ENCODE measurements at regions of chr1 and their contacts with region 1.

Region 1: DNA sequence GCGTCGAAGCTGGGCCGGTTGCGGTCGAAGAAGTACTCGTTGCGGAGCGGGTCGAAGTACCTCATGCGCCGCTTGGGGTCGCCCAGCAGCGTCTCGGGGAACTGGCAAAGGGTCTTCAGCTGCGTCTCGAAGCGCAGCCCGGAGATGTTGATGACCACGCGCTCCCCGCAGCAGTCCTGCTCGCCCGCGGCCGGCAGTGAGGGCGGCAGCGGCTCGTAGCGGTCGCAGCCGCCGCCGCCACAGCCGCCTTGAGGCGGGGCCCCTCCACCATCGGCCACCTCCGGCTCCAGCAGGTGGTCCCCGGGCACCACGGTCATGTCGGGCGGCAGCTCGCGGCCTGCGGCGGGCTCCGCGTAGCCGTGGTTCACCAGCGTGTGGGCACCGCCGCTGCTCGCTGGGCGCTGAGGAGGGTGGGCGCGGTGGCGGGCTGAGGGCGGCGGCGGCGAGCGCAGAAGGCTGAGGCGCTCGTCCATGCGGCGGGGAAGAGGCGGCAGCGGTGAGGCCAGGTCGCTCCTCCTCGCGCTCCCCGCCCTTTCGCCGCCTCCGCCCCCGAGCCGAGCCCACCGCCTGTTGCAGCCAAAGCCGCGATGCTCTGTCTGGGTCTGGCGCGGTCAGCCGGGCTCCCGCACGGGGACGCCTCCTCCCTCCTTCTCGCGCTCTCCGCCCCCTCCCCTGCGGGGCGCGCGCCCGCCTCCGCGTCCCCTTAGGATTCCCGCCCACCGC is at the start of gene KCNA3:
- DNase-seq: peak; percentile 64
- H3K4me3 Mint-ChIP-seq: peak within 1 kb of the TSS; percentile 98
- H3K27ac Mint-ChIP-seq: peak within 1 kb of the TSS; percentile 90
- H3K4me1 Mint-ChIP-seq: peaks cover 43% of the 10 kb centered on the region
- H3K27me3 Mint-ChIP-seq: no peaks in the 10 kb centered on the region
- total RNA-seq, gene KCNA3: 24.0 and 24.4 TPM in 2 replicates

Region 2: DNA sequence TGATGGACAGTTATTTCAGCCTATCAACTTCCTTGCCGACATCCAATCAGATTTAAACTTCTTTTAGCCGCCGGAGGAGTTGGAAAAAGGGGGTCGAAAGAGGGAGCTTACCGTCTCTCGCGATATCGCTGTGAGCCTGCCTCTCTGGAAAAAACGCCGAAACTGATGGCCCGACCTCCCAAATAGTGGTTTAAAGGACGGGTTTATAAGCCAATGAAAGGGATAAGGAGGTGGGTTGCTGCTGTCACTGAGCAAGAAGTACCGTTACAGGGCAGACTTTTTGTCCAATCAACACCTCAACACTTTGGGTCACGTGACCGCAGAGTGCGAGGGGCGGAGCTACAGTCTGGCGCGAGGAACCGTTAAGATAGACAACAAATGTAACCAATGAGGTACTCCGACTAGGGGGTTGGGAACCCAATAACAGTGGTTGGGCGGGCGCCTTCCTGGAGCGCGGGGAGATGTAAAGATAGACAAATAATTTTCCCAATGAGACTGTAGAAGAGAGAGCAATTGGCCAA is 335.6 kb before region 1 on chr1 and contains the start of gene RBM15:
- intact Hi-C with region 1: loop called (anchors 2 kb)
- DNase-seq: peak; percentile 98
- H3K4me3 Mint-ChIP-seq: no peak within 1 kb of the TSS
- H3K27ac Mint-ChIP-seq: no peak within 1 kb of the TSS
- H3K4me1 Mint-ChIP-seq: peaks cover 52% of the 10 kb centered on the region
- H3K27me3 Mint-ChIP-seq: no peaks in the 10 kb centered on the region
- total RNA-seq, gene RBM15: 55.5 TPM in 2 replicates

Region 3: GRCh38 chr1:110645821-110646735 is 28.4 kb before region 1 on chr1:
- intact Hi-C with region 1: loop called (anchors 1 kb)
- DNase-seq: no peak
- H3K4me3 Mint-ChIP-seq: peak overlapping the region; percentile 49
- H3K27ac Mint-ChIP-seq: peak overlapping the region; percentile 77
- H3K4me1 Mint-ChIP-seq: peaks cover 53% of the 10 kb centered on the region
- H3K27me3 Mint-ChIP-seq: no peaks in the 10 kb centered on the region

Region 4: GRCh38 chr1:110657351-110657750 is 17.1 kb before region 1 on chr1:
- intact Hi-C with region 1: no loop called
- DNase-seq: no peak
- H3K4me3 Mint-ChIP-seq: no peak overlapping the region
- H3K27ac Mint-ChIP-seq: no peak overlapping the region
- H3K4me1 Mint-ChIP-seq: peaks cover 27% of the 10 kb centered on the region
- H3K27me3 Mint-ChIP-seq: no peaks in the 10 kb centered on the region

Region 5: DNA sequence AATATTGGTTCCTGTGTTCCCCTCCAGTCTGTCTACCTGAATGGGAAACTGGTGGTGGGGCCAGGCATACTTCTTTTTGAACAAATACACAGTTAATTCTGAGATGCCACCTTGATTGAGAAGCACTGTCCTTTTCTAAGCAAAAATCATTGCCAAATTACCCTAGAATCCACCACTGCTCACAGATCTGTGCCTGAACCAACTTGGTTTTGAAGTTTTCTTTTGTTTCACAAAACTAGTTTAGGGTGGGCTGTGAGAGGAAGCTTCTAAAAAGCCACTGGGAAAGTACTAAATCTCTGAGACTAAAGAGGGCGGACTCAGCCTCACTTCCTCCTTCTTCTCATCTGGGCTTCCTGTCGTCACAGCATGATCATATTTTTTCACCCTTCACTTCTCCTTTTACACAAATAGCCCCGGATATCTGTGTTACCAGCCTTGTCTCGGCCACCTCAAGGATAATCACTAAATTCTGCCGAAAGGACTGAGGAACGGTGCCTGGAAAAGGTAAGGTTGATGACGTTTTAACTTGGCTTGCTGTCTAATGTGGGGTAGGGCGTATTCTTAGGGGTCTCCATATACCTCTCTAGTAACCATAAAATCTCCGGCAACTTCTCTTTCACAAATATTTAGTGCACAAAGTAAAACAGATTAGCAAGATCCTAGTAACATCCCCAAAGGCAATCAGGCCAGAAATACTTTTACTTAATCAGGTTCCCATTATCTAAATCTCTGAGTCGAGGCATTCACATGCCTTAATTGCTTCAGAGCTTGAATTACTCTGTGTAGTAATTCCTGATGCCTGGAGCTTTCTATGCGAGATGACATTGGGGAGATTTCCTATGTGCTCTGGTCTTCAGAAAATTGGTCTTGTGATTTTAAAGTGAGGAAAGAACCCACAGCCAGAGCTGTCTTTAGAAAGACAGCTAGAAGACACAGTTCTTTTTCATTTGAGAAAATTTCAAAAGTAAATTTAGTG is 198.5 kb after region 1 on chr1 and contains the start of gene CD53:
- intact Hi-C with region 1: loop called (anchors 1 kb)
- DNase-seq: peak; percentile 39
- H3K4me3 Mint-ChIP-seq: peak within 1 kb of the TSS; percentile 98
- H3K27ac Mint-ChIP-seq: peak within 1 kb of the TSS; percentile 98
- H3K4me1 Mint-ChIP-seq: peaks cover 34% of the 10 kb centered on the region
- H3K27me3 Mint-ChIP-seq: no peaks in the 10 kb centered on the region
- total RNA-seq, gene CD53: 161 and 165 TPM in 2 replicates

Region 6: DNA sequence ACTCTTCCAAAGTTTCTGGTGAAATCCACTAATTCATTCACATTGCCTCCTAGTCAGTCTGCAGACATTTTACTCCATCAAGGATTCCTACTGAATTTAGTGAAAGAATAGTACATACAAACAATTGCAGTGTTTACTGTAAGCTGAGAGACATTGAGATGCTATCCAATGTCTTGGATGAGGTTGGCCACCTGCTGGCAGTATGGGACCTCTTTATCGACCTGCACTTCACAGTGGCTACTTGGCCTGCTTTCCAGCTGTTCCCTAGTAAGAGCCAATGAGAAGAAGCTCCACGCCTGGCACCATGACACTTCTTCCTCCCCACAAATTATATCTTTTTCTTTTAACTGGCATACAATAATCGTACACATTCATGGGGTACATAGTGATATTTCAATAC is 340.7 kb after region 1 on chr1:
- intact Hi-C with region 1: no loop called
- DNase-seq: no peak
- H3K4me3 Mint-ChIP-seq: no peak overlapping the region
- H3K27ac Mint-ChIP-seq: no peak overlapping the region
- H3K4me1 Mint-ChIP-seq: no peaks in the 10 kb centered on the region
- H3K27me3 Mint-ChIP-seq: peaks cover 26% of the 10 kb centered on the region

Region 7: DNA sequence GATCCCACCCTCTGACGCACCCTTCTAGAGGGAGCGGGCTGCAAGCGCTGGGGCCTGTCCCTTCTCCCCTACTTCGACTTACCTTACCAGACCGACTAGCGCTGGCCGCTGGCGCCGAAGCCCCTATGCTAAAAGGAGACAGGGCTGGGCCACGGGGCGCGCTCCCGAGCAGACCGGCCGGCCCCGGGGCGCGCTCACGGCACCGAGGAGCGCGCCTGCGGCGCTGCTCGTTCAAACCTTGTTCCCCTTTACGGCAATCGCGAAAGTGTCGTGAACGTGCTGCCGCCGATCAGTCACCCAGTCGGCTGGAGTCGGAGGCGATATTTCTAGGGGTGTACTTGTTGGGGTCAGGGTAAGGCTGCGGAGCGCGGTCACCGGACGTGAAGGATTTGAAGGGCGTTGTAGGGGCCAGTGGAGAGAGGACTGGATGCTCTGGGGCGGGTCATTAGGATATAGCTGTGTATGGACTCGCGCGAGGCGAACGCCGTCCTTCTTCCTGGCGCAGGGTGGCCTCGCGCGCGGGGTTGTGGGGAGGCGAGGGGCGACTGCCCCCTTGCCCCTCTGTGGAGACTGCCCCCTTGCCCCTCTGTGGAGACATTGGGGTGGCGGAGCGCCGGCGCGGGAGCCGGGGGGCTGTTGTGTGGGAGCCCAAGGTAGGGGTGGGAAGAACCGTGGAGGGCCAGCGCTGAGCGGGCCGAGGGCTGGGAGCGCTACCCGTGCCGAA is 465.6 kb after region 1 on chr1 and contains the starts of genes CEPT1 and DRAM2:
- intact Hi-C with region 1: loop called (anchors 10 kb)
- DNase-seq: peak; percentile 91
- H3K4me3 Mint-ChIP-seq: peak within 1 kb of the TSS; percentile 96
- H3K27ac Mint-ChIP-seq: peak within 1 kb of the TSS; percentile 92
- H3K4me1 Mint-ChIP-seq: peaks cover 36% of the 10 kb centered on the region
- H3K27me3 Mint-ChIP-seq: no peaks in the 10 kb centered on the region
- total RNA-seq, gene CEPT1: 29.8 and 34.8 TPM in 2 replicates
- total RNA-seq, gene DRAM2: 22.9 and 24.7 TPM in 2 replicates

Region 8: DNA sequence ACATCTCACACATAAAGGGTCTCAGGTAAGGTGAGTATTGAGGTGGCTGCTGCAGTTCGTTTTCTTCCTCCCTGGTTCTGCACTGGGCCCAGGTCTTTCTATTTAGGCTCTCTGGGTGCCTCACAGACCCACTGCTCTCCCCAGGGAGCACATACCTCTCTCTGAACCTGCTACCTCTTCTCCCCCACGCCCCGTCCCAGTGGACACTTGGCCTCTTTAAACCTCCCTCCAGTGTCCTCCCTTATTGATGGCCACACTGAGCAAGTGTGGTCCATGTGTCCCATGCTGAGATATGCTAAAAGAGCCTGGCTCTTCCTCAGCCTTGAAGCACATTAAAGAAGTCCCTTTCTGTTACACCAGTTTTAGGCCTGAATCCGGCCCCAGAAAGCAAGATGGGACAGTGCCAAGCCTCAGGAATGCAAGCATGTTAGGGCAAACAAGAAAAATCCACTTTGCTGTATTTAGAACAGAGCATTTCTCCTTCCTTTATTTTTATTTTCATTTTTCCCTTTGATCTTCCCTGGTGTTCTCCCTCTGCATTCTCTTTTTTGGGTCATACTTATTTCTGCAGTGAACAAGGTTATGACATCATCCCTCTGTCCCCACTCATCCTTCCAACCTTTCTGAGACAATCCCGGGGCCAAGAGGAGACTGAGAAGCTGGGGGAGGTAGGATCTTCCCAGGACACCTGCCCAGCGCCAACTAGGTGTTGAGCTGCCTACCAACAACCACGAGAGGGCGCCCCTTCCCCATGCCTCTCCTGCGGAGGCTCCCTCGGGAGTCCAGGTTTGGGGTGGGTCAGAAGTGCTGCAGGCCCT is 548.0 kb after region 1 on chr1:
- intact Hi-C with region 1: loop called (anchors 5 kb)
- DNase-seq: peak; percentile 70
- H3K4me3 Mint-ChIP-seq: peak overlapping the region; percentile 78
- H3K27ac Mint-ChIP-seq: peak overlapping the region; percentile 93
- H3K4me1 Mint-ChIP-seq: peaks cover 84% of the 10 kb centered on the region
- H3K27me3 Mint-ChIP-seq: no peaks in the 10 kb centered on the region

Region 9: GRCh38 chr1:111747282-111747734 is 1072.8 kb after region 1 on chr1:
- intact Hi-C with region 1: loop called (anchors 10 kb)
- DNase-seq: peak; percentile 66
- H3K4me3 Mint-ChIP-seq: no peak overlapping the region
- H3K27ac Mint-ChIP-seq: no peak overlapping the region
- H3K4me1 Mint-ChIP-seq: peaks cover 16% of the 10 kb centered on the region
- H3K27me3 Mint-ChIP-seq: peaks cover 13% of the 10 kb centered on the region